Gastrocnemius medialis (tissue), 4 donors: ENCODE measurements at regions of chr17 and their contacts with region 1.

Region 1: GRCh38 chr17:56424543-56425044 is 168.9 kb upstream of the NOG start:
- DNase-seq: no peak
- ATAC-seq: no peak
- H3K4me3 ChIP-seq: no peak overlapping the region
- H3K27ac ChIP-seq: no peak overlapping the region
- H3K4me1 ChIP-seq: no peaks in the 10 kb centered on the region
- H3K27me3 ChIP-seq: no peaks in the 10 kb centered on the region
- CTCF ChIP-seq: no peak
- POLR2A ChIP-seq: no peak

Region 2: DNA sequence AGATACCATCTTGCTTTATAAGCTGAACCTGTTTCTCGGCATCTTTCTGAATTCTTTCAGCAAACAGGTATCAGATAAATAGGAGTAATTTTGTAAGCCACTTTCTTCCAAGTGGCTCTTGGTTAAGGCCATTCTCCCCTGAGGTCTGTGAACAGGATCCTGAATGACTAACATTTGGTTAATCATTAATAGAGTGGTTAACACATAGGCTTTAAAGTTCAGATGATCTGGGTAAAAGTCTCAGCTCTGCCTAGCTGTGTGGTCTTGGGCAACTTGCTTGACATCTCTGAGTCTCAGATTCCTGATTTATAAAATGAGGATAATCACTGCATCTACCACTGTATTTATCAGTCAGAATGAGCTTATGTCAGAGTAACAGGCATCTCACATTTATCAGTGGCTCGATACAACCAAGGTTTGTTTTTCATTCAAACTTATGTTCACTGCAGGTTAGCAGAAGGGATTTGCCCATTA is 315.7 kb before region 1 on chr17:
- in situ Hi-C with region 1: loop called in 1 of 4 experiments (anchors 25 kb)
- intact Hi-C with region 1: no loop called
- DNase-seq: no peak
- ATAC-seq: no peak
- H3K4me3 ChIP-seq: no peak overlapping the region
- H3K27ac ChIP-seq: no peak overlapping the region
- H3K4me1 ChIP-seq: no peaks in the 10 kb centered on the region
- H3K27me3 ChIP-seq: no peaks in the 10 kb centered on the region
- CTCF ChIP-seq: no peak
- POLR2A ChIP-seq: no peak

Region 3: GRCh38 chr17:56244268-56244890 is 180.2 kb before region 1 on chr17:
- in situ Hi-C with region 1: no loop called
- intact Hi-C with region 1: no loop called
- DNase-seq: no peak
- ATAC-seq: no peak
- H3K4me3 ChIP-seq: no peak overlapping the region
- H3K27ac ChIP-seq: no peak overlapping the region
- H3K4me1 ChIP-seq: no peaks in the 10 kb centered on the region
- H3K27me3 ChIP-seq: no peaks in the 10 kb centered on the region
- CTCF ChIP-seq: no peak
- POLR2A ChIP-seq: no peak

Region 4: GRCh38 chr17:56478836-56479447 is 54.3 kb after region 1 on chr17:
- in situ Hi-C with region 1: no loop called
- intact Hi-C with region 1: no loop called
- DNase-seq: no peak
- ATAC-seq: no peak
- H3K4me3 ChIP-seq: no peak overlapping the region
- H3K27ac ChIP-seq: no peak overlapping the region
- H3K4me1 ChIP-seq: peaks cover 20 to 26% of the 10 kb centered on the region in 2 donors
- H3K27me3 ChIP-seq: no peaks in the 10 kb centered on the region
- CTCF ChIP-seq: peak in 3 of 5 experiments; percentile 29 to 43 (median 36)
- POLR2A ChIP-seq: no peak